PC-3 (cell line): ENCODE measurements at regions of chr5 and their contacts with region 1.

Region 1: GRCh38 chr5:18792145-18792544 is 1157.9 kb downstream of the TAF11L14 start:
- DNase-seq: peak; percentile 99
- ATAC-seq: peak; percentile 95
- H3K4me3 ChIP-seq: no peak overlapping the region
- H3K27ac ChIP-seq: peak overlapping the region; percentile 62
- H3K4me1 ChIP-seq: peaks cover 10% of the 10 kb centered on the region
- H3K27me3 ChIP-seq: no peaks in the 10 kb centered on the region
- CTCF ChIP-seq: no peak

Region 2: GRCh38 chr5:19240170-19240569 is 448.0 kb after region 1 on chr5:
- CTCF ChIA-PET with region 1: no interaction called
- POLR2A ChIA-PET with region 1: interaction called, 12 read pairs
- intact Hi-C with region 1: no loop called
- DNase-seq: peak; percentile 89
- ATAC-seq: peak; percentile 93
- H3K4me3 ChIP-seq: no peak overlapping the region
- H3K27ac ChIP-seq: no peak overlapping the region
- H3K4me1 ChIP-seq: peaks cover 26% of the 10 kb centered on the region
- H3K27me3 ChIP-seq: no peaks in the 10 kb centered on the region
- CTCF ChIP-seq: no peak